WTC11 (cell line): ENCODE measurements at regions of chr17 and their contacts with region 1.

Region 1: DNA sequence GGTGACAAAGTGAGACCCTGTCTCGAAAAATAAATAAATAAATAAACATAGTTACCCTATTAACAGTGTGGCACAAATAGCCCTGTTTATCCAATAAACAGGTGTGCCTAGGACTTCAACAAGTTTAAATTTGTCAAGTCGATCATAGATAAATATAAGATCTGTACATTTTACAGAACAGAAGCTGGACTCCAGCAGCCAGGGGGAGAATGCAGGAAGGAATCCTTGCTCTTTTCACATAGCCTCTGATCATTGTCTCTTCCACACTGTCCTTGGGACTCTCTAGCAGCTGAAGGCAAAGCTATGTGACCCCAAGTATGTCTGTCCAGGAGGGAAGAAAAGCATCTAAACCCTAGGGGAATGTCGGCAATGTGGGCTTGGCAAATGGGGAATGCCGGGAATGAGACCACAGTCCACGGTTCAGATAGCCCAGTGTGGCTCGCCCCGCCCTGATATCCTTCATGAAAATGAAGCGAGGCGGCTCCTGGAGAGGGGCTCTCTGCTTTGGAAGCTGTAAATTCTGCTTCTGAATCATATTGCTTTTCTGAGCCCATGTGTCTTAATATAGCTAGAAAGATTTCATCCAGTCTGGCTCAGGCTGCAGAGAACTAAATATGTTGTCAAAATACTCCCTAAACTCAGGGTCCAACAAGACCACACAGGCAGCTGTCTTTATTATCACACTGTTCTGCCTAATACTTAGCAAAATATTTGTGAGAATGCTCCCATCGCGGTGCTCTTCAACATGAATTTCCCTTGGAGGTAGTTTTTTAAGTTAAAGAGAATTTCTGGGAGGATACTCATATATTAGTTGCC is 24.9 kb upstream of the GRB2 start:
- DNase-seq: peak; percentile 50
- ATAC-seq: peak; percentile 76
- H3K4me3 Mint-ChIP-seq: no peak overlapping the region
- H3K27ac Mint-ChIP-seq: peak overlapping the region; percentile 82; the same call in 1 of the 2 replicates
- H3K4me1 Mint-ChIP-seq: peaks cover 9% of the 10 kb centered on the region
- H3K27me3 Mint-ChIP-seq: no peaks in the 10 kb centered on the region
- CTCF ChIP-seq: no peak

Region 2: GRCh38 chr17:75393523-75394331 is 36.6 kb before region 1 on chr17:
- CTCF ChIA-PET with region 1: no interaction called
- POLR2A ChIA-PET with region 1: no interaction called
- DNase-seq: peak; percentile 100
- ATAC-seq: peak; percentile 97
- H3K4me3 Mint-ChIP-seq: peak overlapping the region; percentile 94
- H3K27ac Mint-ChIP-seq: peak overlapping the region; percentile 95
- H3K4me1 Mint-ChIP-seq: peaks cover 42% of the 10 kb centered on the region
- H3K27me3 Mint-ChIP-seq: peaks cover 2% of the 10 kb centered on the region; the same call in 1 of the 2 replicates
- CTCF ChIP-seq: no peak

Region 3: DNA sequence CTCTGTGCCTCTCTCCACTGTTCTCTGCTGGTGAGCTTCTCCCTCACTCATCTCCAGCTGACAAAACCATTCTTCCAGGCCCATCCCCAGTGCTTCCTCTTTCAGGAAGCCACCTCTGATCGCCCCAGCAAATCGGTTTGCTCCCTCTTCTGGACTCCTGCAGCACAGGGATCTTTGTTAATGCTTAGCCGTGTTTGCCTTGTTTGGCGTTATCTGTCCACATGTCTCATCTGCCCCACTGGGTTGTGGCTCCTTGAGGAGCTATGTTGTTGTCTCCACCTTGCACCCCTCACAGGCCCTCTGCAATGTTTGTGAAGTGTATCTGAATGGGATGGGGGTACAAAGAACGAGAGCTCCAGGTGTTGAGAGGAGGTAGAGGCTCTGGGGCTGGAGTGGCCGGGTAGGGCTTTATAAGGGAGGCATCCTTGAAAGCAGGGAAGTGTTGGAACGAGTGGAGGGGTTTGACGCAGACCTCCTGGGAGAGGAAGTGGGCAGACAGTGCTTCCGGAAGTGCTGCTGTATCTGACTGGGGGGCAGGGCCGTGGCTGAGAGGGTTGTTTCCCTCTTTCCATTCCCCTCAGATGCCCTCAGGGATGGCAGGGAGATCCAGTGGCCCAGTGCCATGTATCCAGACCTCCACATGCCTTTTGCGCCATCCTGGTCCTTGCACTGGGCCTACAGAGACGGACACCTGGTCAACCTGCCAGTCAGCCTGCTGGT is 57.1 kb after region 1 on chr17:
- CTCF ChIA-PET with region 1: interaction called, 15 read pairs
- POLR2A ChIA-PET with region 1: interaction called, 4 read pairs
- DNase-seq: no peak
- ATAC-seq: no peak; the same call in 1 of the 2 replicates
- H3K4me3 Mint-ChIP-seq: no peak overlapping the region
- H3K27ac Mint-ChIP-seq: peak overlapping the region; percentile 36
- H3K4me1 Mint-ChIP-seq: peaks cover 6% of the 10 kb centered on the region
- H3K27me3 Mint-ChIP-seq: no peaks in the 10 kb centered on the region
- CTCF ChIP-seq: no peak

Region 4: DNA sequence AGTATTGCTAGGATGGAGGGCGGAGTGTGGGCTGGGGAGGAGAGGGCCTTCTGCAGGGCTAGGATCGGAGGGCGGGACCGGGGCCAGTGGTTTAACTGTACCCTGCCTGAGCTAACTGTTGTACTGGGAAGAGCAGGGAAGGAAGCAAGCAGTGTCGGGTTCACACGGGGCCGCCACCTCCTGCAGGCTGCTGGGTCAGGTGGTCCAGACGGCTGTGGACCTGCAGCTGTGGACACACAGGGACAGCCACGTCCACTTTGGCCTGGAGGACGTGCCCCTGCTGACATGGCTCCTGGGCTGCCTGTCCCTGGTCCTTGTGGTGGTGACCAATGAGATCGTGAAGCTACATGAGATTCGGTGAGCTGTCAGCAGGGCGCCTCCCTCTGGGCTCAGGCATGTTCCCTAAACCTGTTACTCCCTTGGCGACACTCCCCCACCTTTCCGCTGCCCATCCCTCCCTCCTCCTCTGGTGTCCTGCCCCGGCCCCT is 68.4 kb after region 1 on chr17:
- CTCF ChIA-PET with region 1: interaction called, 13 read pairs
- POLR2A ChIA-PET with region 1: no interaction called
- DNase-seq: peak; percentile 34
- ATAC-seq: peak; percentile 46
- H3K4me3 Mint-ChIP-seq: no peak overlapping the region
- H3K27ac Mint-ChIP-seq: no peak overlapping the region; the same call in 1 of the 2 replicates
- H3K4me1 Mint-ChIP-seq: no peaks in the 10 kb centered on the region
- H3K27me3 Mint-ChIP-seq: no peaks in the 10 kb centered on the region
- CTCF ChIP-seq: no peak

Region 5: GRCh38 chr17:75565068-75565467 is 134.7 kb after region 1 on chr17:
- CTCF ChIA-PET with region 1: no interaction called
- POLR2A ChIA-PET with region 1: no interaction called
- DNase-seq: no peak
- ATAC-seq: no peak
- H3K4me3 Mint-ChIP-seq: no peak overlapping the region
- H3K27ac Mint-ChIP-seq: no peak overlapping the region
- H3K4me1 Mint-ChIP-seq: no peaks in the 10 kb centered on the region
- H3K27me3 Mint-ChIP-seq: no peaks in the 10 kb centered on the region
- CTCF ChIP-seq: no peak